ENCODE measurements at regions of chr16 and their contacts with region 1.

Region 1: DNA sequence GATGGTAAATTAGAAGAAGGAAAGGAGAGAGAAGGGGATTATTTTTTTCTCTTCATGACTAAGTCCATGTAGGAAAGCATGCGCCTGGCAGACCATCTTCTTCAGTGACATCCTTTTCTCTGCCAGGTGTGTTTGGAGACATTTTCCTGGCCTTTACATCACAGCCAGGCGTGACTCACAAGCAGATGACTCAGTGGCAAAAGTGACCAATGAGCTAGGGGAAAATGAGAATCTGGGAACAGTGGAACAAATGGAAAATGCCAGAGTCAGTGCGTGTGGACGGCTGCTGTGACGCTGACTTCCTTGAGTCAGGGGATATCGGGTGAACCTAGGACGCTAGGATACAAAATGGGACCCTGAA is 9.4 kb downstream of the KIAA0513 start:
- DNase-seq: no peak
- H3K4me3 ChIP-seq: no peak overlapping the region
- H3K27ac ChIP-seq: no peak overlapping the region
- H3K4me1 ChIP-seq: no peaks in the 10 kb centered on the region
- H3K27me3 ChIP-seq: no peaks in the 10 kb centered on the region
- CTCF ChIP-seq: no peak
- EP300 ChIP-seq: no peak
- POLR2A ChIP-seq: no peak

Region 2: GRCh38 chr16:85245307-85246172 is 208.5 kb after region 1 on chr16:
- intact Hi-C with region 1: loop called in 1 of 4 experiments (anchors 10 kb)
- DNase-seq: peak; percentile 72 to 84 (median 80)
- H3K4me3 ChIP-seq: no peak overlapping the region
- H3K27ac ChIP-seq: peak overlapping the region in 1 of 2 donors; percentile 40
- H3K4me1 ChIP-seq: peaks cover 10% of the 10 kb centered on the region
- H3K27me3 ChIP-seq: no peaks in the 10 kb centered on the region
- CTCF ChIP-seq: peak; percentile 49 to 85 (median 82)
- EP300 ChIP-seq: no peak
- POLR2A ChIP-seq: no peak